B cell (primary cell): ENCODE measurements at regions of chr12 and their contacts with region 1.

Region 1: DNA sequence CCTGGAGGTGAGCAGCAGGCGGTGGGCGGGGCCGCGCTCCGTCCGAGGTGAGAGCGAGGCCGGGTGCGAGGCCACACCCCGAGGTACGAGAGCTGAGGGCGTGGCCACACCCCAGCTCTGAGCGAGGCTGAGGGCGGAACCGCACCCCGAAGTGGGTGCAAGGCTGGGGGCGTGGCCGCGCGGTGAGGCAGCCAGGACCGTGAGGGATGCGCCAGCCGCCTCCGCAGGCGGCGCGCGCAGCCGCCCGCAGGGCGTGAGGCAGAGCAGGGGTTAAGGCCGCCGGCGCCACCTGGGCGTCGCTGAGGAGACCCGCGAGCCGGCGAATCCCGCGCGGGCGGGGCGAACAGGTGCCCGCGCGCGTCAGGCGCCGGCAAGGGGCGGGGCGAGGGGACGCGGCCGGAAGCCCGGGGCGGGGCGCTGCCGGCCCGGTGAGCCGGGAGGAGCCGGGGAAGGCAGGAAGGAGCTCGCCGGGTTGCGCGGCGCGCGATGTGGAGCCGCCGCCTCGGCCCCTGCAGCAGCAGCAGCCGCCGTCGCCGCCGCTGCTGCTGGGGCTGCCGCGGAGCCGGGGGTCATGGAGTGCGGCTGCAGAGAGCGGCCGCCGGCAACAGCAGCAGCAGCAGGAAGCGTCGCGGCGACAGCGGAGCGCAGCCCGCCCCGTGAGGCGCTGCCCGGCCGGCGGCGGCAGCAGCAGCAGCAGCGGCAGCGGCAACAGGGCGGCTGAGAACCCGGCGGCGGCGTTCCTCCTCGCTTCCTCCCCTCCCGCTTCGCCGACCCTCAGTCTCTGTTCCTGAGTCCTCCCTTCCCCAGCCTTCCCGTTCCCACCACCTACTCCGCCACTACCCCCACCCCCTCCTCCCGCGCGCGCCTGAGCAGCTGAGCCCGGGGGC is at the start of gene BICDL1:
- DNase-seq: peak; percentile 98
- ATAC-seq: peak; percentile 82
- H3K4me3 ChIP-seq: peak within 1 kb of the TSS in 4 of 5 experiments; percentile 47 to 69 (median 59)
- H3K4me3 Mint-ChIP-seq: peak within 1 kb of the TSS; percentile 88
- H3K27ac ChIP-seq: peak within 1 kb of the TSS; percentile 41 to 67
- H3K27ac Mint-ChIP-seq: peak within 1 kb of the TSS; percentile 89
- H3K4me1 ChIP-seq: peaks cover 13 to 16% of the 10 kb centered on the region in 2 donors
- H3K4me1 Mint-ChIP-seq: peaks cover 24% of the 10 kb centered on the region
- H3K27me3 ChIP-seq: peaks cover 0 to 6% (median 0%) of the 10 kb centered on the region in 4 experiments
- H3K27me3 Mint-ChIP-seq: peaks cover 5% of the 10 kb centered on the region
- CTCF ChIP-seq: no peak
- total RNA-seq, gene BICDL1: 41.5 and 43.6 TPM in 2 replicates

Region 2: GRCh38 chr12:120012067-120012621 is 23.1 kb after region 1 on chr12:
- CTCF ChIA-PET with region 1: interaction called, 4 read pairs
- POLR2A ChIA-PET with region 1: interaction called, 4 read pairs
- intact Hi-C with region 1: loop called (anchors 1 kb)
- DNase-seq: peak; percentile 79
- ATAC-seq: peak; percentile 76
- H3K4me3 ChIP-seq: no peak overlapping the region
- H3K4me3 Mint-ChIP-seq: peak overlapping the region; percentile 51
- H3K27ac ChIP-seq: no peak overlapping the region
- H3K27ac Mint-ChIP-seq: peak overlapping the region; percentile 82
- H3K4me1 ChIP-seq: peaks cover 7 to 20% of the 10 kb centered on the region in 2 donors
- H3K4me1 Mint-ChIP-seq: peaks cover 48% of the 10 kb centered on the region
- H3K27me3 ChIP-seq: no peaks in the 10 kb centered on the region
- H3K27me3 Mint-ChIP-seq: no peaks in the 10 kb centered on the region
- CTCF ChIP-seq: no peak